ENCODE measurements at regions of chr15 and their contacts with region 1.

Region 1: DNA sequence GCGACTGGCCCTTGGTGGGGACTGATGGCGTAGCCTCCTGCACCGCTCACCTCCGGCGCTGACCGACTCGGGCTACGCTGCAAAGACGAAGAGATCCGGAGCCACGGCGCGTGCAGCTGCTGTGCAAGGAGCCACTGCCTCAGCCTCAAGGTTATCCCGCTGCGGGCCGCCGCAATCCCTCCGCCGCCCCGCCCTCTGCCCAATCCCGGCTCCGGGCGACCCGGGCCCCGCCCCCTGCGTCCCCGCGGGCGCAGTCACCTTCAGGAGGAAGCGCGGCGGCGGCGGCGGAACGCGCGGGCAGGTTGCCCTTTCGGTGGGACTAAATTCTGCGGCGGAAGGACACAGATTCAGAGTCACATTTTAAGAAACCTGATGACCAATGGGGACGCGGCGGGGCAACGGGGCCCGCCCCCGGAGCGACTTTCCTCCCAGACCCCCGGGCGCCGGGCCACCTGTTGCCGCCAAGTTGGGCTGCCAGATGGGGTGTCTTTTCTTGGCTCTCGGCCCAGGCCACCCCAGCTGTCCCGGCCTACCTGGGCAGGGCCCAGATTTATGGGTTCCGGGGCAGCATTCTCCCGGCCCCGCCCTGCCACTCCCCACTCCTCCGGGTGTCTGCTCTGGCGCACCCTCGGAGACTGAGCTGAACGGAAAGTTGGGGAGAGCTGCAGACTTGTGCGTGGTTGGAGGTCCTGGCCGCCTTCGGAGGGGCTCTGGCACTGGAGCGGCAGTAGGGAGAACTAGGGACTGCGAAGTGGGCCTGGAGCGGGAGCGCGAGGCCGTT is at the start of gene PKM:
- DNase-seq: peak; percentile 99
- ATAC-seq: peak; percentile 48
- H3K4me3 Mint-ChIP-seq: peak within 1 kb of the TSS; percentile 98
- H3K27ac Mint-ChIP-seq: peak within 1 kb of the TSS; percentile 99
- H3K4me1 Mint-ChIP-seq: peaks cover 27% of the 10 kb centered on the region
- H3K27me3 Mint-ChIP-seq: no peaks in the 10 kb centered on the region
- total RNA-seq, gene PKM: 2,479 to 3,112 TPM

Region 2: DNA sequence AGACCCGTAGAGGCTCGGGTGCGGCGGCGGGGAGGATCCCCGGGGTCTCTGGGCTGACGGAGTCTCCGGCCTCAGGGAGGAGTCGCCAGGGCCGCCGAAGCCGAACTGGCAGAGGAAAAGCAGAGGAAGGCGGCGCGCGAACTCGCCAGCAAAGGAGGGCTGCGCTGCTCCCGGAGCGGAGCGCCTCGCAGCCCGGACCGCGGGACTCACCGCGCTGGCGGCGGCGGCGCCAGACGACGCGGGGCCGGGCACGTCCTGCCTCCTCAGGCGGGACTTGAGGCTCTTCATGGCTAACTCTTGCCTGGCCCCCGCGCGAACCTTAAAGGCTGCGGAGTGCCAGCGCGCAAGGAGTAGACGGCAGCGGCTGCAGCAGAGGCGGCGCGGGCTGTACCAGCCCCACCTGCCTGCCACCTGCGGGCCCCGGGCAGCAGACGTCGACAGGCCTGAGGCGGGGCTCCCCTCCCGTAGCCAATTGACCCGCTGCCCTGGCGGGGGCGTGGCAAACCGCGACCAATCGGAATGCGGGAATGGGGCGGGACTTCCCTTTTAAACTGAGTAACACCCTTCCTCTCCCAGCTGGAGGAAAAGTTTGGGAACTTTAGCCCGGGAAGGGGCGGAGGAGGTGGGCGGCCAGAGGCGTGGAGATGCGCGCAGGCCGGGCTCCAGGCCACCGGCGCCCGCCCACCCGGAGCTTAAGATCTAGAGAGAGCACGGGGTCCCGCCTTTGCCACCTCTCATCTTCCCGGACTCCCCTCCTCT is 1468.0 kb before region 1 on chr15 and contains the start of gene UACA:
- CTCF ChIA-PET with region 1: no interaction called
- POLR2A ChIA-PET with region 1: no interaction called
- intact Hi-C with region 1: loop called in 1 of 2 experiments (anchors 5 kb)
- DNase-seq: peak; percentile 91
- ATAC-seq: peak; percentile 98
- H3K4me3 Mint-ChIP-seq: peak within 1 kb of the TSS; percentile 77
- H3K27ac Mint-ChIP-seq: peak within 1 kb of the TSS; percentile 45
- H3K4me1 Mint-ChIP-seq: peaks cover 19% of the 10 kb centered on the region
- H3K27me3 Mint-ChIP-seq: peaks cover 27% of the 10 kb centered on the region
- total RNA-seq, gene UACA: 6.6 TPM

Region 3: DNA sequence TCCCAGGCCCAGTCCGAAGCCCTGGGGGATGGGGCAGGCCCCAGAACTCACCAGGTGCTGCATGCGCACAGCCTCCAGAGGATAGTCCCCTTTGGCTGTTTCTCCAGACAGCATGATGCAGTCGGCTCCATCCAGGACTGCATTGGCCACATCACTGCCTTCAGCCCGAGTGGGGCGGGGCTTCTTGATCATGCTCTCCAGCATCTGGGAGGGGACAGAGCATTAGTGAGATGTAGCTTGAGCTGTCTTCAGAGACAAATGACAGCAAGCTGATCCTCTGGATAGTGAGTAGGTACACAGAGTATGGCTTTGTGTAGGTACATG is 24.6 kb before region 1 on chr15:
- CTCF ChIA-PET with region 1: interaction called, 6 read pairs
- POLR2A ChIA-PET with region 1: interaction called, 10 read pairs
- intact Hi-C with region 1: loop called in 1 of 2 experiments (anchors 2 kb)
- DNase-seq: no peak
- ATAC-seq: no peak
- H3K4me3 Mint-ChIP-seq: no peak overlapping the region
- H3K27ac Mint-ChIP-seq: peak overlapping the region; percentile 73
- H3K4me1 Mint-ChIP-seq: peaks cover 37% of the 10 kb centered on the region
- H3K27me3 Mint-ChIP-seq: no peaks in the 10 kb centered on the region

Region 4: GRCh38 chr15:72265031-72265430 is 33.8 kb after region 1 on chr15:
- CTCF ChIA-PET with region 1: interaction called, 19 read pairs
- POLR2A ChIA-PET with region 1: interaction called, 3 read pairs
- intact Hi-C with region 1: loop called in 1 of 2 experiments (anchors 1 kb)
- DNase-seq: no peak
- ATAC-seq: no peak
- H3K4me3 Mint-ChIP-seq: no peak overlapping the region
- H3K27ac Mint-ChIP-seq: no peak overlapping the region
- H3K4me1 Mint-ChIP-seq: peaks cover 45% of the 10 kb centered on the region
- H3K27me3 Mint-ChIP-seq: no peaks in the 10 kb centered on the region

Region 5: GRCh38 chr15:72319985-72320671 is 88.9 kb after region 1 on chr15 and contains the start of gene CELF6:
- CTCF ChIA-PET with region 1: interaction called, 3 read pairs
- POLR2A ChIA-PET with region 1: interaction called, 3 read pairs
- intact Hi-C with region 1: loop called in 1 of 2 experiments (anchors 1 kb)
- DNase-seq: peak; percentile 84
- ATAC-seq: peak; percentile 78
- H3K4me3 Mint-ChIP-seq: peak within 1 kb of the TSS; percentile 71
- H3K27ac Mint-ChIP-seq: peak within 1 kb of the TSS; percentile 21
- H3K4me1 Mint-ChIP-seq: peaks cover 15% of the 10 kb centered on the region
- H3K27me3 Mint-ChIP-seq: peaks cover 8% of the 10 kb centered on the region
- total RNA-seq, gene CELF6: 0.37 to 0.40 TPM

Region 6: DNA sequence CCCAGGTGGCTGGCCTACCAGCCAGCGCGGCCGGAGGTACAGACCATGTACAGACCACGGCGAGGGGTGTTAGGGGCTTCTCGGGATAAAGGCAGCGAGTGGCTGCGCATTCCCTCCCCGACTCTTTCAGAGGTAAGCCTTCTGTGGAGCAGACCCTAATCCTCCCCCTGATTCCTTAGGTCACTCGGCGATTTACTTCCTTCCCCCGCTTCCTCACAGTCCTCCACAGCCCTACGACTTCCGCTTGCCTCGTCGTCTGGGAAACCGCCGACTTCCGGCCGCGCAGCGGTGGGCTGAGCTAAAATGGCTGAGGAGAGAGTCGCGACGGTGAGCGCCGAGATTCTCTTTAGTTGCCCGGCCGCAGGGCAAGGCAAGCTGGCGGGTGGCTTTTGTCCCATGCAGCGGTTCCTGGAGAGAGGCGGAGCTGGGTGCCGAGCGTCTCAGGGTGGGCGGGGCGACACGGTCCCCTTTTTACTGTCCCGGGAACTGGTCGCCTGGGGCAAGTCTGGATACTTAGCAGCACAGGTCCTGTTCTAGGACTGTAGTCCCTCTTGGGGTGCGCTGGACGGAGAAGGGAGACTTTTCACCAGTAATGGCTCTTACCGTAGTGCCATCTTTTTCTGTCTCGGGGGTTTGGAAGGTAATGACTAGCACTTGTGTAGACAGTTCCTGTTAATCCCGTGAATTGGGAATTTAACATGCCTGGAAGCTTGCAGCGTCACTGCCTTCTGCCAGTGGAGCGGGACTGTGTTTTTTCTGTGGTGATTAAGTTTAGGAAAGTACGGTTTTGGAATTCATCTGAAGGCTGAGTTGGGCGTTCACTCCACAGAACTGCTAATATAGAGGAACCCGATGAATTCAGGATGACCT is 454.9 kb after region 1 on chr15 and contains the starts of genes BBS4 and HIGD2B:
- CTCF ChIA-PET with region 1: no interaction called
- POLR2A ChIA-PET with region 1: no interaction called
- intact Hi-C with region 1: loop called (anchors 1 to 5 kb)
- DNase-seq: peak; percentile 93
- ATAC-seq: peak; percentile 96
- H3K4me3 Mint-ChIP-seq: peak within 1 kb of the TSS; percentile 89
- H3K27ac Mint-ChIP-seq: peak within 1 kb of the TSS; percentile 92
- H3K4me1 Mint-ChIP-seq: peaks cover 20% of the 10 kb centered on the region
- H3K27me3 Mint-ChIP-seq: no peaks in the 10 kb centered on the region
- total RNA-seq, gene BBS4: 13.7 to 14.9 TPM
- total RNA-seq, gene HIGD2B: not detected

Region 7: DNA sequence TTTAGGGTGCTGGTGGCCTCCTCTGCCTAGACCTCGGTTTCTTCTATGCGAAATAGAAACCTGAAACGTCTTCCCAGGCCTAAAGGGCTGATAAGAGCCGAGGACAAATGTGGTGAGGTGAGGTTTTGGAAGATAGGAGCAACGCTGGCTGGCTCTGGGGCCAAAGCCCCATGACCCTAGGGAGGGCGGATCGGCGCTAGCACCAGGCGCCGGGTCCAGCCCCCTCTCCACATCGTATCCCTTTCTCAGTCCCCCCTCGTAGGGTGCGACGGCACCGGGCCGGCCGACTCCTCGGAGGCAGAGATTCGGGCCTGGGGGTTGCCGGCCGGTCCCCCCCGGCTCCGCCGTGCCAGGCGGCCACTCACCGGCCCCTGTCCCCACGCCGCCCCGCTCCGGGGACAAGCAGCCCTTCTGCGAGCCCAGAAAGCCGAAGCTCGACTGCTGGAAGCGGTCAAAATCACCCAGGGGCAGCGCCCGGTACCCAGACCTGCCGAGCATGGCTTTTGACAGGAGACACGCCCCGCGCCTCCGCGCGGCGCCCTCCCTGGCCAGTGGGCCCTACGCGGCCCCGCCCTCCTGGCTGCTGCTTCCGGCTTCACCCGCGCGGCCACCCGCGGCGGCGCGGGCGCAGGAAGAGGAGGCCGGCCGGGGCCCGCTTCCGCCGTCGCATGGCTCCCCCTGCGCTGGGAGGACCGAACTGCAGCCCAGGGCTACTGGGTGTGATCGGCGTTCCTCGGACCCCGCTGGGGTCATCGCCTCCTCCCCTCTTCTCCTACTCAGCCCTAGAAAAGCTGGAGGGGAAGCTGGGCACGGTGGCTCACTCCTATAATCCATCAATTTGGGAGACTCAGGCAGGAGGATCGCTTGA is 1760.7 kb after region 1 on chr15 and contains the start of gene STOML1:
- CTCF ChIA-PET with region 1: no interaction called
- POLR2A ChIA-PET with region 1: no interaction called
- intact Hi-C with region 1: loop called in 1 of 2 experiments (anchors 10 kb)
- DNase-seq: peak; percentile 96
- ATAC-seq: peak; percentile 74
- H3K4me3 Mint-ChIP-seq: peak within 1 kb of the TSS; percentile 74
- H3K27ac Mint-ChIP-seq: peak within 1 kb of the TSS; percentile 86
- H3K4me1 Mint-ChIP-seq: peaks cover 42% of the 10 kb centered on the region
- H3K27me3 Mint-ChIP-seq: no peaks in the 10 kb centered on the region
- total RNA-seq, gene STOML1: 6.3 to 7.1 TPM

Measured in activated CD4-positive, alpha-beta T cell treated with anti-CD3 and anti-CD28 coated beads for 36 hours (primary cell).